Posterior cingulate gyrus (tissue), 11 donors: ENCODE measurements at regions of chrX and their contacts with region 1.

Region 1: GRCh38 chrX:120015145-120016067 is 62.1 kb downstream of the RHOXF2B start:
- DNase-seq: peak in 1 of 10 donors; percentile 85

Region 2: GRCh38 chrX:120111611-120112010 is 96.2 kb after region 1 on chrX:
- intact Hi-C with region 1: loop called (anchors 10 kb)
- DNase-seq: no peak

Region 3: GRCh38 chrX:121160987-121161386 is 1145.6 kb after region 1 on chrX:
- intact Hi-C with region 1: no loop called
- DNase-seq: no peak